ENCODE measurements at regions of chr7 and their contacts with region 1.

Region 1: GRCh38 chr7:150356265-150356897 is 12.2 kb upstream of the REPIN1 start:
- DNase-seq: peak; percentile 40 to 41
- ATAC-seq: peak in 1 of 2 experiments; percentile 73; a peak in 3 of 6 replicates
- H3K4me3 ChIP-seq: no peak overlapping the region
- H3K27ac ChIP-seq: no peak overlapping the region
- H3K4me1 ChIP-seq: peaks cover 3% of the 10 kb centered on the region; the same call in 1 of the 3 replicates
- CTCF ChIP-seq: peak; percentile 78
- EP300 ChIP-seq: no peak
- POLR2A ChIP-seq: no peak
- RAD21 ChIP-seq: peak; percentile 49 to 50

Region 2: GRCh38 chr7:150341256-150342120 is 14.9 kb before region 1 on chr7 and contains the start of gene RARRES2:
- CTCF ChIA-PET with region 1: interaction called, 19 read pairs
- POLR2A ChIA-PET with region 1: no interaction called
- DNase-seq: no peak
- ATAC-seq: no peak
- H3K4me3 ChIP-seq: no peak within 1 kb of the TSS
- H3K27ac ChIP-seq: no peak within 1 kb of the TSS
- H3K4me1 ChIP-seq: no peaks in the 10 kb centered on the region
- CTCF ChIP-seq: no peak
- EP300 ChIP-seq: no peak
- POLR2A ChIP-seq: no peak
- RAD21 ChIP-seq: no peak
- polyA plus RNA-seq, gene RARRES2: not detected in 2 replicates

Region 3: GRCh38 chr7:150368096-150368883 is 11.9 kb after region 1 on chr7 and contains the start of gene REPIN1:
- CTCF ChIA-PET with region 1: interaction called, 44 read pairs
- POLR2A ChIA-PET with region 1: no interaction called
- DNase-seq: peak; percentile 72 to 93
- ATAC-seq: peak; percentile 69 to 70
- H3K4me3 ChIP-seq: peak within 1 kb of the TSS; percentile 96
- H3K27ac ChIP-seq: peak within 1 kb of the TSS; percentile 96 to 100
- H3K4me1 ChIP-seq: peaks cover 19% of the 10 kb centered on the region; the same call in 2 of the 3 replicates
- CTCF ChIP-seq: no peak
- EP300 ChIP-seq: no peak
- POLR2A ChIP-seq: peak; percentile 43
- RAD21 ChIP-seq: no peak
- polyA plus RNA-seq, gene REPIN1: 48.1 and 58.0 TPM in 2 replicates

Region 4: DNA sequence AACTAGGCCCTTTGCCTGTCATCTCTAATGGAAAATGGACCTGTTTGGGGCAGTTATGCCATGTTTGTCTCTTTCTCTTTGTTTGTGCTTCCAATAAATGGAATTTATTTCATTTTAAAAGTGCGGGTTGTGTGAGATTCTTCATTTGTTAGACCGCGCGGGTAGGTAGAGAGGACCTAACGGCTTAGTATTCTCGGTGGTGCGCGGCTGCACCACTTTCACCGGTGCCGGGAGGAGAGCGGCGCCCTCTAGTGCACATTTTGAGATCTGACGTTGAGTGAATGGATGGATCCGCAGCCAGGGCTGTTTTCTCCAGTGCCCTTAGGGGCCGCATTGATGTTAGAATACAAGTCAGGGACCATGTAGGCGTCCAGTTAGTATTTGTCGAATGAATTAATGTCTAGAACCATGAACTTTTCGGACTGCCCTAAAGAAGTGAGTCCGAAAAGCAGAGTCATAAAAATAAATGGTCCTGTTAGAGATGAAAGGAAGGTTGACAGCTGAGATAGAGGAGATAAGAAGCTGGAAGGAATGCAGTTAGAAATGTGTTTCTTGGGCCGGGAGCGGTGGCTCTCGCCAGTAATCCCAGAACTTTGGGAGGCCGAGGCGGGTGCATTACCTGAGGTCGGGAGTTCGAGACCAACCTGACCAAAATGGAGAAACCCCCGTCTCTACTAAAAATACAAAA is 64.8 kb after region 1 on chr7:
- CTCF ChIA-PET with region 1: interaction called, 10 read pairs
- POLR2A ChIA-PET with region 1: no interaction called
- DNase-seq: peak; percentile 79 to 92
- ATAC-seq: peak; percentile 99 to 100
- H3K4me3 ChIP-seq: no peak overlapping the region
- H3K27ac ChIP-seq: 0 out of 6 replicates have a peak overlapping the region, but pooled peaks of 1 of the 2 experiments have one; percentile 43
- H3K4me1 ChIP-seq: peaks cover 5% of the 10 kb centered on the region; the same call in 1 of the 3 replicates
- CTCF ChIP-seq: peak; percentile 92
- EP300 ChIP-seq: no peak
- POLR2A ChIP-seq: no peak
- RAD21 ChIP-seq: peak; percentile 85 to 89

Measured in A549 (cell line).